ENCODE measurements at regions of chr5 and their contacts with region 1.

Region 1: DNA sequence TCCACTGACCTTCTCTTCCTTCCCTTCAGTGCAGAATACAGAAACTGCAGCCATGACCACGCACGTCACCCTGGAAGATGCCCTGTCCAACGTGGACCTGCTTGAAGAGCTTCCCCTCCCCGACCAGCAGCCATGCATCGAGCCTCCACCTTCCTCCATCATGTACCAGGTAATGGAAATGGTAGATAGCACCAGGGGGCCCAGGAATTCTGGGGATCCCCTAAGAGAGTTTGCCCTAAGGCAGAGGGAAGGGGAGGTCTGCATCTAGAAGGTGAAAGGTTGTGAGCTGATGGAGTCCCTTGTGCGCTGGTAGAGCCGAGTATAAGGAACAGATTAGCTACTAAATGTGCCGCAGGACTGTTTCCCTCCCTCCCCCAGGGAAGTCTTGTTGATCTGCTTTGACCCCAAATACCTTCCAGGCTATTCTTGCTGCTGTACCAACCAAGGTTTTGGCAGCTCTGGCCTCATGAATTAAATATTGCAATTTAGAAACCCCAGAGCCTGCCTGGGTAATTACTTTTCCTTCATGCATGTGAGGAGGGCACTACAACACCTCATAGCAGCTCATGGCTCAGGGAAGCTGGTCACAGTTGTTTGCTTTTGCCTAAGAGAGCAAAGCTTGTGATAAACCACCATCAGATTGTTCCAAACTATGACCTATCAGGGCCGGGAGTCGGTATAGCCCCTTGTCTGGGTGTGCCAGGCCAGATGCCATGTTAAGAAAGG is 19.6 kb downstream of the CYFIP2 start:
- DNase-seq: no peak
- ATAC-seq: peak; percentile 6

Region 2: DNA sequence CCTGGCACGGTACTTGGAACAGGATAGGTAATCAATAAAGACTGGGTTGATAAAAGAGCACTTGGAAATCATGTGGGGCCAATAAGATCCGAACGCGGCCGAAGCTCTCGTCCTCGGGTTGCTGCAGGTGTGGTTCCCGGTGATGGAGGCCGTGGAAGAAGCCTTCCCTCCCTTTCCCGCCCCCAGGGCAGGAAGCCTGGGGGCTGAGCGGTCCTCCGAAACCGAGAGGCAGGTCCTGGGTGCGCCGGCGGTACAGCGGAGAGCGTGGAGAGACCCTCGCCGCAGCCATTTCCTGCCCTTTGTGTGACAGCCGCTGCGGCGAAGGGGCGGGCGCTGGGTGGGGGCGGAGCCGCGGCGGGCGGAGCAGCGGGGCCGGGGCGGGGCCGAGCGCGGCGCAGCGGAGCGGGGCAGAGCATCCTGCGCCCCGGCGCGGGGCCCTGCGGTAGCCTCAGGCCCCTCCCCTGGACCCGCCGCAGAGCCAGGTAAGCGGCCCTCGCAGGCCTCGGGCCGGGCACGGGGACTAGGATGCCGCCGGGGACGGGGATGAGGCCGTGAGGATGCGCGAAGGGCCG is 19.7 kb before region 1 on chr5 and contains the start of gene CYFIP2:
- intact Hi-C with region 1: loop called (anchors 2 kb)
- DNase-seq: peak; percentile 82
- ATAC-seq: peak; percentile 86
- total RNA-seq, gene CYFIP2: 29.6 TPM